Activated B cell treated with CpG ODN at 0.5 μM for 24 hours (primary cell): ENCODE measurements at regions of chr2 and their contacts with region 1.

Region 1: DNA sequence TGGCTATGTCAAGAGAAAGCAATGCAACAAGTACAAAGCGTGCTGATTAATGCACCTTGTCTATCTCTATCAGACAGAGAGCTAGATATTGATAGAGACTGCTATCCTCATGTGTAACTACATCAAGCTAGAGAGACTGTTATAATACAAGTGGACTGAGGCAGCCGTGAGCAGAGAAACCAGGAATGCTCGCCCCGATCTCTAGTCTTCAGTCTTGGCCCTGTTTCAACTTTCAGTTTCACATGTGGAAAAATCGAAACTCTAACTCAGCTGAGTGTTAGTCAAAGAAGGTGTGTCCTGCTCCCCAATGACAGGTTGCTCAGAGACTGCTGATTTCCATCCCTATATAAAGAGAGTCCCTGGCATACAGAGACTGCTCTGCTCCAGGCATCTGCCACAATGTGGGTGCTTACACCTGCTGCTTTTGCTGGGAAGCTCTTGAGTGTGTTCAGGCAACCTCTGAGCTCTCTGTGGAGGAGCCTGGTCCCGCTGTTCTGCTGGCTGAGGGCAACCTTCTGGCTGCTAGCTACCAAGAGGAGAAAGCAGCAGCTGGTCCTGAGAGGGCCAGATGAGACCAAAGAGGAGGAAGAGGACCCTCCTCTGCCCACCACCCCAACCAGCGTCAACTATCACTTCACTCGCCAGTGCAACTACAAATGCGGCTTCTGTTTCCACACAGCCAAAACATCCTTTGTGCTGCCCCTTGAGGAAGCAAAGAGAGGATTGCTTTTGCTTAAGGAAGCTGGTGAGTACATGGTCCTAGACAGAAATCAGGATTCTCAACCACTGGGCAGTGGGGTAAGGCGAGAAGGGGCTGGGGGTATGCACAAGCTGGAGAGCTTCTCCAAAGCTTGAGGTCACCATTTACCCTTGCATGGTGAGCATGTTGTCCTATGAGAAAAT is at the start of gene RSAD2:
- DNase-seq: no peak
- ATAC-seq: peak; percentile 83
- H3K4me3 Mint-ChIP-seq: peak within 1 kb of the TSS; percentile 80
- H3K27ac Mint-ChIP-seq: no peak within 1 kb of the TSS
- H3K4me1 Mint-ChIP-seq: peaks cover 30% of the 10 kb centered on the region
- H3K27me3 Mint-ChIP-seq: peaks cover 4% of the 10 kb centered on the region
- CTCF ChIP-seq: no peak
- total RNA-seq, gene RSAD2: 0.29 and 0.67 TPM in 2 replicates

Region 2: GRCh38 chr2:6674381-6674780 is 203.3 kb before region 1 on chr2:
- CTCF ChIA-PET with region 1: no interaction called
- POLR2A ChIA-PET with region 1: no interaction called
- intact Hi-C with region 1: no loop called
- DNase-seq: no peak
- ATAC-seq: no peak
- H3K4me3 Mint-ChIP-seq: no peak overlapping the region
- H3K27ac Mint-ChIP-seq: no peak overlapping the region
- H3K4me1 Mint-ChIP-seq: no peaks in the 10 kb centered on the region
- H3K27me3 Mint-ChIP-seq: no peaks in the 10 kb centered on the region
- CTCF ChIP-seq: no peak

Region 3: DNA sequence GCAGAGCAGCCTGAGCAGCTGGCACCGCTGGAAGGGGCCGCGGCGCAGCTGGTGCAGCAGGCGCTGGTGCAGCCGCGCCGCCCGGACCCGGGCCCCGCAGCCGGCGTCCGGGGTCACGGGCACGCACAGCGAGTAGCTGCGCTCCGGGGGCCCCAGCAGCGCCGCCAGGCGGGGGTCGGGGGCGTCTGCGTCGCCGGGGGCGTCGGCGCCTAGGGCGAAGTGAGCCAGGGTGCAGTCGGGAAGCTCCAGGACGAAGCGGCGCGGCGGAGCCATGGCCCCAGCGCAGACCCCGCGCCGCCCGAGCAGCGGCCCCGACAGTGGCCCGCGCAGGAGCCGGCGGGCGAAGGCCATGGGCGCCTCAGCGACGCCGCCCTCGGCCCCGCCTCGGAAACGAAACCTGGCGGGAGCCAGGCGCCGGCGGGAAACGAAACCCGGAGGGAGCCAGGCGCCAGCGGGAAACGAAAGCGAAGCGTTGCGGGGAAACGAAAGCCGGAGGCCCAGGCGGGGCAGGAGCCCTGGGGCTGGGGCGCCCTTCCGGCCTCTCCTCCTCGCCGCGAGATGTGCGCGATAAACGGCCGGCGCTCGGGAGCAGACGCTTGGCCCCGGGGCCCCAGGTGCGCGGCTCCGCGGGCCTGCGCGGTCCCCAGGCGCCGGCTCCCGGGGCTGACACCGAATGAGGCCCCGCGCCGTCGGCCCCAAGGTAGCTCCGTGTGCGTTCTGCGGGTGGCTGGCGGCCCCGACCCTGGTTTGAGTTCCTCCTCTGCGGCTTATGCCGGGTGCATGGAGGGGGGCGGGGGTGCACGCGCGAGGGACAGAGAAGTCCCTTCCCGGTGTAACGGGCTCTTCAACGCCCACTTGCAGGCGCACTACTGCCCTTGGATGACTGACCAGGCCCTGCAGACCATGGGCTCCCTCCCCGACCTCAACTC is 12.0 kb before region 1 on chr2 and contains the start of gene CMPK2:
- CTCF ChIA-PET with region 1: interaction called, 7 read pairs
- POLR2A ChIA-PET with region 1: no interaction called
- intact Hi-C with region 1: loop called (anchors 1 kb)
- DNase-seq: peak; percentile 65
- ATAC-seq: peak; percentile 72
- H3K4me3 Mint-ChIP-seq: peak within 1 kb of the TSS; percentile 87
- H3K27ac Mint-ChIP-seq: peak within 1 kb of the TSS; percentile 50
- H3K4me1 Mint-ChIP-seq: peaks cover 11% of the 10 kb centered on the region
- H3K27me3 Mint-ChIP-seq: no peaks in the 10 kb centered on the region
- CTCF ChIP-seq: no peak
- total RNA-seq, gene CMPK2: 1.2 and 1.9 TPM in 2 replicates

Region 4: GRCh38 chr2:6917071-6917760 is 39.6 kb after region 1 on chr2 and contains the start of gene RNF144A:
- CTCF ChIA-PET with region 1: interaction called, 3 read pairs
- POLR2A ChIA-PET with region 1: no interaction called
- intact Hi-C with region 1: loop called (anchors 5 kb)
- DNase-seq: peak; percentile 80
- ATAC-seq: peak; percentile 93
- H3K4me3 Mint-ChIP-seq: peak within 1 kb of the TSS; percentile 72
- H3K27ac Mint-ChIP-seq: no peak within 1 kb of the TSS
- H3K4me1 Mint-ChIP-seq: peaks cover 6% of the 10 kb centered on the region
- H3K27me3 Mint-ChIP-seq: peaks cover 9% of the 10 kb centered on the region
- CTCF ChIP-seq: no peak
- total RNA-seq, gene RNF144A: 0.56 and 0.89 TPM in 2 replicates